GM10248 (cell line): ENCODE measurements at regions of chr4 and their contacts with region 1.

Region 1: DNA sequence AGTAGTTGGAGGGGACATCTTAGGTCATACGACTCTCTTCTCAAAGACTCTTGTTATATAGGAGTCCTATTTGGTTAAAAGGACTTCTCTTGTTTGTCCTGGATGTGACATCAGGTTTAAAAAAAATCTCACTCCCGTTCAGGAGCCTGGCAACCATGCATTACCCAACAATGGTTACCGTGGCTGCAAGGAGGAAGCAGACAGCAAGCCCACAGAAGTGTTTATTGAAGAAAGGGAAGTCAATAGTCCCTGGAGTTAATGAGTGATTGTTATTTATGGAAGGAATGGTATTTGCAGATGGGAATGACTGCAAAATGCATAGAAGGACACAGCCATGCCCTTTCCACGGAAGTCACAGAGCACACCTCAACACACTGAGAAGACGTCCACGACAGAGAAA is 75.9 kb upstream of the ENPP6 start:
- DNase-seq: no peak
- CTCF ChIP-seq: no peak

Region 2: DNA sequence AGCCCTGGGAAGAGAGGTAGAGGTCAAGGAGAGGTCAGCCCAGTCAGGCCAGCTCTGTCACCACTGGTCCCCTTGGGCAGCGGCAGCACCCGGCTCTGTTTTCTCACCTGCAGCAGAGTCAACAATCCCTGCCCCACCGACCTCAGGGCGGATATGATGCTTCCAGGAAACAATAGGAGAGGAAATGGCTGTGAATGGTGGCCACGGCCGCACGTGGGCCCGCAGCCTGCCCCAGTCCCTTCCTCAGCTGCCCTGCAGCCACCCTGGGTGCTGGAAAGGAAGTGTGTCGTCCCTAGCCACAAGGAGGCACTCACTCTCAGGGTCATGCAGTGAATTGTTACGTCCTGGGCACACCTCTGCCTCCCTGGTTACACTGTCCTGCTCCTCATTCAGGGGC is 16.6 kb after region 1 on chr4:
- CTCF ChIA-PET with region 1: interaction called, 15 read pairs
- POLR2A ChIA-PET with region 1: interaction called, 3 read pairs
- DNase-seq: peak; percentile 57
- CTCF ChIP-seq: peak; percentile 44